ENCODE measurements at regions of chr18 and their contacts with region 1.

Region 1: DNA sequence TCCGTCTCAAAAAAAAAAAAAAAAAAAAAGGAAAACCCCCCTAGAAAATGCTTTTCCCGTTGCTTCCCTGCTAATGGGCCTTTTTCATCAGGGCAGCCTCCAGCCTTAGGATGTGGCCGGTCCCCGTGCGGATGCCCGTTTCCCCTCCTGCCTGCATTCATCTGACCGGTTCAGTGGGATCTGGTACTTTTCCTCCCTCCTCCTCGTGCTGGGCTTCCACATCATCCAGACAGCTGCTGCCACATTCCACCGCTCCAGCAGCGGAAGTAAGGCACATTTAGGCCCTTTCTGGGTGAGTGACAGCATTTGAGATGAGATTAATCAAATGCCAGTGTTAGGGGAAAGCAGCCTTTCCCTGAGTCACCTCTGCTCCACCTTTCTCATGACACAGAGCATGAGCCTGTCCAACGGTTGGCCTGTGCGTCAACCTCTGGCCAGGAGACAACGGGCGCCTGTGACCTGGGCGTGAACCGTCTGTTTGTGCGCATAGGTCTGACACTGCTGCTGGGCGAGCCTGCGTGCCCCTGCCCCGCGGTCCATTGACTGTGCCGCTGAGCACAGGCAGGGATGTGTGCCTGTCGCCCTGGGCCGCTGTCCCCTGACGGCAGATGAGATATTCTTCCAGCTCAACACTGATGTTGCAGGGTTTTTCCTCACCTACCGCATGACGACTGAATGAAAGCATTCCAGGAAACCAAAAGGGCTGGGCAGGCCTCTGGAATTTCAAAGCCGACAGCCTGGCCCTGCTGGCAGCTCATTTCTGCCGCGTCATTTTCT is 174.0 kb downstream of the TGIF1 start:
- DNase-seq: peak; percentile 84
- ATAC-seq: peak; percentile 77

Region 2: DNA sequence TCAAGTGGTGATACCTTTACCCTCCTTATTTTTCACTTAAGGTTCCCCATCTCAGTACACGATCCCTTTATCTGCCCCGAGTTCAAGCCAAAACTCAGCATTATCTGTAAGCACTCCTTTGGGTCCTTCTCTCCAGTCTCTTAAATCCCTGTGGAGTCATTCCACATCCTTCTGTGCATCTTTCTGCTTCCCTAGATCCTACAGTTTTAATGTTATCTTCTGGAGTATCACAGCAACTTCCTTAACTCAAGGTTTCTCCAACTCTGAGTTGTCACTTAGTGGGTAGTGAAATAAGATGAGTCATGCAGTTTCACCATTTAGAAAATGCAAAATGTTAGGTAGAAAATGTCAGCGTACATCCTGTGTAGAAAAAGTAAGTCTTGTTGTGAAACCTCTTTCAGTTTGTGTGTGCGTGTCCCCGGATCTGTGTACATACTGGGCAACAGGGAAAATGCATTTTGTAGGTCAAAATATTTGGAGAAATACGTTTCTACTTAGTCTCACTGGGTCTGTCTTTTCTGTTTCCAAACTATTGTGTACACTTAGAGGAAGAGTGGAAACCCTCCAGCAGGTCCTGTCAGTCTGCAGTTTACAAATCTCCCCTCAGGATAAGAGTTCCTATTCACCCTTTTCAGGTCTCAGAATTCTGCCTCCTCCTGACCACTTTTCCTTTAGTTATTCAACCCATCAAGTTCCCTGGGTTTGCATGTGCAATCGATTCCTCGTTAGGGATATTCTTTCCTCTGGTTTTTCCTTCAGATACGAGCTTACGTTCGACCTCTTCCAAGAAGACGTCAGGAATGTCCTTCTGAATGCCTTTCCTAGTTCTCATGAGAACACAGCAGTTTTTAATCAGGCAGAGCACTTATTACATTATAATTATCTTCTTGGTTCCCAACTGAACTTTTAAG is 19.2 kb before region 1 on chr18:
- intact Hi-C with region 1: loop called (anchors 1 kb)
- DNase-seq: no peak
- ATAC-seq: peak; percentile 47

Region 3: GRCh38 chr18:3821524-3821923 is 197.6 kb after region 1 on chr18:
- intact Hi-C with region 1: no loop called
- DNase-seq: no peak
- ATAC-seq: no peak

Measured in Right ventricle myocardium inferior (tissue), 1 donor.